ENCODE measurements at regions of chr19 and their contacts with region 1.

Region 1: DNA sequence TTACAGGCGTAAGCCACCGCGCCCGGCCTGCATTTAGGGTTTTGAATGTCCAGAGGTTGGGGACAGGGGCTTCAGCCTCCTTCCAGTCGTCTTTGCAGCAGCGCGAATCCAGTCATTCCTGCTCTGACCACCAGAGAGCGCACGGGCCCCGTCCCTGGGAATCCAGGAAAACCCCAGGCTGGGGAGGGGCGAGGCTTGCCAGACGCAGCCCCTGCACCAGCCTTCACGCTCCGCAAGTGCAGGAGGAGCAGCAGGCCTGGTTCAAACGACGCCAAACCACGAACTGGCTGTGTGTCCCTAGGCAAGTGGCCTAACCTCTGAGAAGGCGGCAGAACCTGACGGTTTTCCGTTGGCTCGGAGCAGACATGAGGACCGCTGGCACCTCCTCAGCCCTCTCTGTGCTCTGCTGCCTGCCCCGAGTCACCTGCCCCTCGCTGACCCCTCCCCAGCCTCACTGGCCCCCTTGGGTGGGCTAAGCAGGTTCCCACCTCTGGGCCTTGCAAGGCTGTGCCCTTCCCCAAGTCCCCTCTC is 2.0 kb upstream of the RNF126 start:
- DNase-seq: peak; percentile 87
- H3K4me3 Mint-ChIP-seq: peak overlapping the region; percentile 12
- H3K27ac Mint-ChIP-seq: no peak overlapping the region
- H3K4me1 Mint-ChIP-seq: peaks cover 11% of the 10 kb centered on the region
- H3K27me3 Mint-ChIP-seq: no peaks in the 10 kb centered on the region
- CTCF ChIP-seq: peak; percentile 69

Region 2: GRCh38 chr19:734716-735115 is 69.7 kb after region 1 on chr19:
- CTCF ChIA-PET with region 1: interaction called, 3 read pairs
- intact Hi-C with region 1: loop called (anchors 2 kb)
- DNase-seq: no peak
- H3K4me3 Mint-ChIP-seq: no peak overlapping the region
- H3K27ac Mint-ChIP-seq: no peak overlapping the region
- H3K4me1 Mint-ChIP-seq: peaks cover 16% of the 10 kb centered on the region
- H3K27me3 Mint-ChIP-seq: peaks cover 24% of the 10 kb centered on the region
- CTCF ChIP-seq: no peak

Measured in Calu3 (cell line).